Heart left ventricle (tissue), 16 donors: ENCODE measurements at regions of chr2 and their contacts with region 1.

Region 1: DNA sequence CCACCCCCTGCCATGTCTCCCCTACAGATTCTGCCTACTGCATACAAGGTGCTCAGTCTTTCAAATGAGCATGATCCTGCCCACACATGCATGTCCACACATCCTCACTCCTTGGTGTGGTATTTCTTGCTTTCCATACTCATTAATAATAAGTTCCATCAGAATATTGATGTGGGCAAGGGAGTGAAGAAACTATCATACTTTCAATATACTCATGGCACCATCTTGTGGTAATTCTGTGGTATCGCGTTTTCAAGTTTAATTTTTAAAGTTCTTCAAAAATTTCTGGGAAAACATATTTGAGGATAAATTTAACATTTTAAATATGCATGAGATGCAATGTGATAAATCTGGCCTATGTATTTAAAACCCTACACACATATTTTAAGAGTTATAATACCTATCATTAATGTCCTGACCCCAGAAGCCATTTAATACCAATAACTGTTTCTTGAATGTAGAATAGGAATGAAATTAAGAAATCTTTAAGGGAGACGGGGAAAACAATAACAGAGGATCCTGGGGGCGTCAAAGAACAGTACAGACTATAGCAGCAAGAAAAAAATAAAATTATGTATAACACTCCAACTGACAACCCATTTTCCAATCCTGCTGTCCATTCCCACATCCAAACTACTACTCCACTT is 110.1 kb downstream of the ZNF385B start:
- DNase-seq: no peak
- ATAC-seq: no peak
- H3K4me3 ChIP-seq: no peak overlapping the region
- H3K27ac ChIP-seq: no peak overlapping the region
- H3K4me1 ChIP-seq: no peaks in the 10 kb centered on the region
- H3K27me3 ChIP-seq: peaks cover 0 to 5% (median 0%) of the 10 kb centered on the region in 9 donors
- CTCF ChIP-seq: peak; percentile 37 to 73 (median 64)
- POLR2A ChIP-seq: no peak

Region 2: DNA sequence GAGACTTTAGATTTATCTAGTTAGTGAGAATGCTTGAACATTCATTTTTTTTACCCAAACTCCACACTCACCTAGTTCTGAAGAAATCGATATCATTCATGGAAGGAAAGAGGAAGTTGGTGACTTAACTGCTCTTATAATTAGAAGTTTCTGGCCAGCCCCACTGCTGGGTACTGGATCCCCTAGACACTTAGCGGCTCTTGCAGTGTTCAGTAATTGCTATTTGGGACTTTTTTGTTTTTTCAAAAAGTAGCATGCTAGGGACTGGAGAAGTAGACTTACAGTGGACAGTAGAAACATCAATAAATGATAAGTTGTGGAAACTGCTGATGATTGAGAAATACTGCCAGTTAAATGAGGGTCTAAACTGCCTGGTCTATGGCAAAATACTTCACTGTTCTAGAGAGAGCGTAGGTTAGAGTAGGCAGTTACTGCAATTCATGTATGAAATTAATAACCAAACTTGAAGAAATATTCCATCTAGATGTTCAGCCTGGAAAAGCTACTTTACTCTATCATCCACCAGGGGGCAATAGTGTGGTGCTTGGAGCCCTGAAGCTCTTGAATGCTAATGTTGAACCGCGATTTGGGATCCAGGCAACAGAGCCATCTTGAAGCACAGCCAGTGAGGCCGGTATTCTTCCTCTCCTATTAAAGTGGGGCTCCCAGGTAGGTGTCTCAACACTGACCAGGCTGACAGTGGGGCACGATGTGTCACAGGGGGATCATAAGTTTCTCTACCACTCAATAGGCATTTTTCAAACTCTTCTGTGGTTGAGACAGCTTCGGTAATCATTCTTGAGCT is 340.5 kb before region 1 on chr2:
- intact Hi-C with region 1: loop called in 3 of 10 experiments (anchors 2 to 5 kb)
- DNase-seq: peak in 2 of 5 donors; percentile 17 to 40
- ATAC-seq: peak in 3 of 4 donors; percentile 49 to 73 (median 50)
- H3K4me3 ChIP-seq: peak overlapping the region in 1 of 12 donors; percentile 14
- H3K27ac ChIP-seq: no peak overlapping the region
- H3K4me1 ChIP-seq: no peaks in the 10 kb centered on the region
- H3K27me3 ChIP-seq: peaks cover 0 to 11% (median 0%) of the 10 kb centered on the region in 9 donors
- CTCF ChIP-seq: peak; percentile 58 to 81 (median 68)
- POLR2A ChIP-seq: no peak

Region 3: GRCh38 chr2:179422037-179422643 is 329.1 kb before region 1 on chr2:
- intact Hi-C with region 1: loop called in 9 of 10 experiments (anchors 1 to 5 kb)
- DNase-seq: peak; percentile 40 to 72 (median 60)
- ATAC-seq: peak in 2 of 4 donors; percentile 52 to 73
- H3K4me3 ChIP-seq: no peak overlapping the region
- H3K27ac ChIP-seq: no peak overlapping the region
- H3K4me1 ChIP-seq: no peaks in the 10 kb centered on the region
- H3K27me3 ChIP-seq: peaks cover 0 to 8% (median 0%) of the 10 kb centered on the region in 9 donors
- CTCF ChIP-seq: peak; percentile 46 to 77 (median 68)
- POLR2A ChIP-seq: no peak

Region 4: GRCh38 chr2:179805001-179805400 is 53.7 kb after region 1 on chr2:
- intact Hi-C with region 1: no loop called
- DNase-seq: no peak
- ATAC-seq: no peak
- H3K4me3 ChIP-seq: no peak overlapping the region
- H3K27ac ChIP-seq: no peak overlapping the region
- H3K4me1 ChIP-seq: no peaks in the 10 kb centered on the region
- H3K27me3 ChIP-seq: peaks cover 0 to 12% (median 0%) of the 10 kb centered on the region in 9 donors
- CTCF ChIP-seq: no peak
- POLR2A ChIP-seq: no peak

Region 5: GRCh38 chr2:180017784-180018183 is 266.5 kb after region 1 on chr2:
- intact Hi-C with region 1: no loop called
- DNase-seq: peak in 1 of 5 donors; percentile 44
- ATAC-seq: no peak
- H3K4me3 ChIP-seq: no peak overlapping the region
- H3K27ac ChIP-seq: no peak overlapping the region
- H3K4me1 ChIP-seq: no peaks in the 10 kb centered on the region
- H3K27me3 ChIP-seq: peaks cover 0 to 5% (median 0%) of the 10 kb centered on the region in 9 donors
- CTCF ChIP-seq: no peak
- POLR2A ChIP-seq: no peak